Heart right ventricle (tissue), 16 donors: ENCODE measurements at regions of chr2 and their contacts with region 1.

Region 1: DNA sequence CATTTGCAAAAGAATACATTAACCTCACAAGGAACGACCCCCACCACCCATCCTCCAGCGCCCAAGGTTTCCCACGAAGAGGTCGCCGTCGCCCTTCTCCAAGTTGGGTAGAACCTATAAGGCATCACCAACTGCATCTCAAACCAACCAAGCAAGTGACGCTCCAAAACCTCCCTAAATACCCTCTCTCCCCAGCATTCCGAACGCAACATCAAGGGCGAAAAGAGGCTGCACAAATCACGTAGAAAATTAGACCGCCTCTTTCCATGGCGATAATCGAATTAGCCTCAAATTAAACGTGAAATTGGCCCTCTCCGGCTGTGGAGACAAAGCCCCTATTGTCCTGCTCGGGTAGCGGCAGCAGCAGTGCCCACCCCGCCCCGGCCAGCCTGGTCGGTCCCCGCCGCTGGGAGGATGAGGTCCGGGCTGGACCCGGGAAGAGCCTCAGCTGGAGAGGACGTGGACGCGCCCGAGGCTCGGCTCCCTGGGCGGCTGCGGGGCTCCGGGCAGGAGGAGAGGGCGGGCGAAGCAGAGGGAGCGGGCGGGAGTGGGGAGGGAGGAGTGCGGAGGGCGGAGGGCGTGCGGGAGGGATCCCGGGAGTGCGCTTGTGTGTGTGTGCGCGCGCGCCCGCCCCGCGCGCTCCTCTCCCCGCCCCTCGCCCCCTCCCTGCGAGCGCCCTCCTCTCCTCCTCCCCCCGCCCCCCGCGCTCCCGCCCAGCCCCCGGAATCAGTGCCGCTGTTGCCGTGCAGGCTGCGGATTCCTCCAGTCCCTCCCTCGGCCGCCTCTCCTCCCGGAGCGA is at the start of gene SPTBN1:
- DNase-seq: peak; percentile 94 to 95
- ATAC-seq: peak; percentile 91 to 96 (median 94)
- H3K4me3 ChIP-seq: peak within 1 kb of the TSS; percentile 55 to 87 (median 79)
- H3K27ac ChIP-seq: peak within 1 kb of the TSS; percentile 92 to 99 (median 98)
- H3K4me1 ChIP-seq: peaks cover 7 to 45% (median 34%) of the 10 kb centered on the region in 9 donors
- H3K27me3 ChIP-seq: peaks cover 0 to 52% (median 0%) of the 10 kb centered on the region in 7 donors
- CTCF ChIP-seq: peak in 1 of 9 donors; percentile 5
- total RNA-seq, gene SPTBN1: 366 to 643 (median 507) TPM

Region 2: GRCh38 chr2:54206596-54206995 is 249.2 kb before region 1 on chr2:
- intact Hi-C with region 1: loop called in 5 of 10 experiments (anchors 5 to 10 kb)
- DNase-seq: no peak
- ATAC-seq: peak in 4 of 8 donors; percentile 34 to 66 (median 42)
- H3K4me3 ChIP-seq: no peak overlapping the region
- H3K27ac ChIP-seq: peak overlapping the region in 1 of 10 donors; percentile 84
- H3K4me1 ChIP-seq: peaks cover 2 to 36% (median 33%) of the 10 kb centered on the region in 9 donors
- H3K27me3 ChIP-seq: no peaks in the 10 kb centered on the region
- CTCF ChIP-seq: peak; percentile 50 to 87 (median 71)

Region 3: DNA sequence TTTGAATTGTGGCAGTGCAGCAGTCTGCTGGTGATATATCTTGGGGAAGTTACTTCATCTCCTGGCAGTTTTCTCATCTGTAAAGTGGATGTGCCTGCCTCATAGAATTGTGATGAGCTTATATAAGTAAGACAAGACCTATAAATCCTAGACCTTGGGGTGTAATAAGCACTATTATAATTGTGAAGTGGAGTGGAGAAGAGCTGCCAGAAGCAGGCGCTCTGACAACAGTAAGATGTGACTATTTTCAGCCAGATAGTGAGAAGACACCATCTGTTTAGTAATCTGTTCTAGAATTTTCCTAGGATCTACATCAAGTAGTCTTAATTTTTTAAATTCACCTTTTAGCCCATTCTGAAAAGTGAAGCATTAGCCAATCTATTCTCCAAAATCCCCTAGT is 114.1 kb before region 1 on chr2:
- intact Hi-C with region 1: loop called in 5 of 10 experiments (anchors 5 to 10 kb)
- DNase-seq: no peak
- ATAC-seq: peak in 7 of 8 donors; percentile 35 to 77 (median 74)
- H3K4me3 ChIP-seq: no peak overlapping the region
- H3K27ac ChIP-seq: peak overlapping the region in 2 of 10 donors; percentile 10 to 13
- H3K4me1 ChIP-seq: peaks cover 0 to 37% (median 24%) of the 10 kb centered on the region in 9 donors
- H3K27me3 ChIP-seq: no peaks in the 10 kb centered on the region
- CTCF ChIP-seq: peak in 6 of 9 donors; percentile 30 to 63 (median 43)

Region 4: DNA sequence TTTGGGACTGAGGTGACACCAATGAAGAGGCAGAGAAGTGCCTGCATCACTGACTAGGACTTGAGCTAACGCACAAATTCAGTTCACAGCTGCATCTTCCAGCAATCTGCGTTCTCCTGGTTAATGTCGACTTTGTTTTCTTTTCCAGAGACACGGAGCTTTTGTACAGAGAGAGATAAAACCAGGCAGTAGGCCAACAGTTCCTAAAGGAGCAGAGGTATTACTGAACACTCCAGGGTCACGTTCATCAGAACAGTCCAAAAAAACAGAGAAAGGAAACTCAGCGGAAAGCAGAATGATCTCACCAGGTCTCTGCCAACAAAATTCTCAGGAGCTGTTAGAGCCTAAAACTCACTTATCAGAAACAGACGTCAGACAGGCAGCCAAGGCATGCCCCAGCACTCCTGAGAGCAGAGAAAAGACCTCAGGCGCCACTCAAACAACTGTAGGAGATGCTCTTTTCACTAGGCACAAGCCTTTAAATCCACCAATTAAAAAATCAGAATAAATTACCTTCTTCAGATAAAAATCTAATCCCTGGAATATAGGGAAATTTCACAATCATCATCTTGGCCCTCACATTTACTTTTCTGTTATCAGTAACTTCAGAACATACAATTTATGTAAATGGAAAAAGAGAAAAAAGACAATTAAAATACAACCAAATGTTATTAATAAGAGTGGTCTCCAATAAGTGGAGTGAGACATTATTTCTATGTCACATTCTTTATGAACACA is 95.5 kb before region 1 on chr2:
- intact Hi-C with region 1: loop called in 3 of 10 experiments (anchors 5 to 10 kb)
- DNase-seq: peak; percentile 39 to 83
- ATAC-seq: peak; percentile 88 to 96 (median 94)
- H3K4me3 ChIP-seq: peak overlapping the region in 8 of 10 donors; percentile 3 to 31 (median 17)
- H3K27ac ChIP-seq: peak overlapping the region; percentile 0 to 84 (median 77)
- H3K4me1 ChIP-seq: peaks cover 3 to 35% (median 25%) of the 10 kb centered on the region in 9 donors
- H3K27me3 ChIP-seq: no peaks in the 10 kb centered on the region
- CTCF ChIP-seq: no peak

Region 5: GRCh38 chr2:54422072-54422581 is 33.6 kb before region 1 on chr2:
- intact Hi-C with region 1: loop called in 3 of 10 experiments (anchors 5 kb)
- DNase-seq: no peak
- ATAC-seq: no peak
- H3K4me3 ChIP-seq: no peak overlapping the region
- H3K27ac ChIP-seq: peak overlapping the region in 2 of 10 donors; percentile 9 to 46
- H3K4me1 ChIP-seq: peaks cover 8 to 87% (median 49%) of the 10 kb centered on the region in 9 donors
- H3K27me3 ChIP-seq: peaks cover 0 to 4% (median 0%) of the 10 kb centered on the region in 7 donors
- CTCF ChIP-seq: no peak

Region 6: DNA sequence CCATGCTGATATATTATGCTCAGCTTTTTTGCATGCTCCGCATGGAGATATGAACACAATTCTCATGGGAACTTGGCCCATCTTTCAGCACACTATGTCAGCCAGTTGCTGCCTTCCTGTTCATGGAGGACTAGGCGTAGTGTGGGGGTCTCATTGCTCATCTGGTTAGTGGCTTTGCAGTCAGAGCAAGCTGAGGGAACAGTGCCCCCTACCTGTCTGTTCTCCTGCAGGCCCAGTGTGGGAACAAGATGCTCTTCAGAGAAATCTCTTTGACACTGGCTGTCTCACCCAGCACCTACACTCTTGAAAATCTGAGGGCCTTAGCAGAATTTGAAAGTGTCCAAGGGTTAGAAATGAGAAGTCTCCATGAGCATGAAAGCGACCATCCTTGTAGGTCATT is 47.4 kb after region 1 on chr2:
- intact Hi-C with region 1: loop called in 3 of 10 experiments (anchors 5 kb)
- DNase-seq: no peak
- ATAC-seq: peak in 4 of 8 donors; percentile 20 to 57 (median 23)
- H3K4me3 ChIP-seq: no peak overlapping the region
- H3K27ac ChIP-seq: peak overlapping the region in 3 of 10 donors; percentile 14 to 72 (median 24)
- H3K4me1 ChIP-seq: peaks cover 49 to 100% (median 99%) of the 10 kb centered on the region in 9 donors
- H3K27me3 ChIP-seq: no peaks in the 10 kb centered on the region
- CTCF ChIP-seq: peak in 8 of 9 donors; percentile 23 to 65 (median 48)

Region 7: DNA sequence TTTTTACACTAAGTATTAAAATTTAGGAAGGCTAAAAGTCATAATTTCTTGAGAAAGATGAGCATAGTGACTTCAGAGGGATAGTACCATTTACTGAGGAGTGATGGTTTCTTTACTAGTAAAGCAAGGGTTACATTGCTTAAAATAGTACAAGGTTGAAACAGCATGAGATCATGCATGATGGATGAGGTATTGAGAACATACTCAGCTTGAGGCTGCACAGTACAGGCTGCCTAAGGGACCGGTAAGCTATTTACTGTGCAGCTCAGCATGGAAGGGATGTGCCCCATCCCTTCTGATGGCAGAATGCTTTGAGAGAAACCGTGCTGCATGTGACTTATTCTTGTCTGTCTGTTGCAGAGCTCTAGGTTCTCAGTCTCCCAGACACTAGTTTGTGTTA is 389.8 kb after region 1 on chr2:
- intact Hi-C with region 1: no loop called
- DNase-seq: no peak
- ATAC-seq: no peak
- H3K4me3 ChIP-seq: no peak overlapping the region
- H3K27ac ChIP-seq: no peak overlapping the region
- H3K4me1 ChIP-seq: no peaks in the 10 kb centered on the region
- H3K27me3 ChIP-seq: no peaks in the 10 kb centered on the region
- CTCF ChIP-seq: no peak